ENCODE measurements at regions of chr4 and their contacts with region 1.

Region 1: GRCh38 chr4:156169011-156169410 is 215.3 kb upstream of the CTSO start:
- DNase-seq: peak; percentile 1
- H3K4me3 ChIP-seq: no peak overlapping the region
- H3K27ac ChIP-seq: no peak overlapping the region
- H3K4me1 ChIP-seq: no peaks in the 10 kb centered on the region
- CTCF ChIP-seq: peak; percentile 50

Region 2: GRCh38 chr4:156322592-156322991 is 153.6 kb after region 1 on chr4:
- CTCF ChIA-PET with region 1: no interaction called
- POLR2A ChIA-PET with region 1: no interaction called
- intact Hi-C with region 1: no loop called
- DNase-seq: no peak
- H3K4me3 ChIP-seq: no peak overlapping the region
- H3K27ac ChIP-seq: no peak overlapping the region
- H3K4me1 ChIP-seq: no peaks in the 10 kb centered on the region
- CTCF ChIP-seq: no peak

Region 3: GRCh38 chr4:156378033-156378665 is 209.1 kb after region 1 on chr4:
- CTCF ChIA-PET with region 1: no interaction called
- POLR2A ChIA-PET with region 1: no interaction called
- intact Hi-C with region 1: loop called (anchors 1 kb)
- DNase-seq: peak; percentile 1
- H3K4me3 ChIP-seq: no peak overlapping the region
- H3K27ac ChIP-seq: no peak overlapping the region
- H3K4me1 ChIP-seq: no peaks in the 10 kb centered on the region
- CTCF ChIP-seq: peak; percentile 60